CD4-positive, alpha-beta T cell (primary cell): ENCODE measurements at regions of chr1 and their contacts with region 1.

Region 1: GRCh38 chr1:244864253-244865027 is at the start of gene HNRNPU:
- DNase-seq: peak; percentile 90 to 99 (median 96)
- ATAC-seq: peak; percentile 62
- H3K4me3 ChIP-seq: peak within 1 kb of the TSS; percentile 91
- H3K4me3 Mint-ChIP-seq: peak within 1 kb of the TSS; percentile 96
- H3K27ac ChIP-seq: peak within 1 kb of the TSS; percentile 98 to 99
- H3K27ac Mint-ChIP-seq: peak within 1 kb of the TSS; percentile 98
- H3K4me1 ChIP-seq: peaks cover 24% of the 10 kb centered on the region
- H3K4me1 Mint-ChIP-seq: peaks cover 53% of the 10 kb centered on the region
- H3K27me3 ChIP-seq: no peaks in the 10 kb centered on the region
- H3K27me3 Mint-ChIP-seq: peaks cover 5% of the 10 kb centered on the region
- CTCF ChIP-seq: peak; percentile 30
- total RNA-seq, gene HNRNPU: 415 TPM

Region 2: GRCh38 chr1:244451951-244452795 is 412.3 kb before region 1 on chr1:
- CTCF ChIA-PET with region 1: no interaction called
- POLR2A ChIA-PET with region 1: interaction called, 28 read pairs
- intact Hi-C with region 1: loop called (anchors 5 to 10 kb)
- DNase-seq: peak; percentile 97 to 100 (median 99)
- ATAC-seq: peak; percentile 83
- H3K4me3 ChIP-seq: peak overlapping the region; percentile 86
- H3K4me3 Mint-ChIP-seq: peak overlapping the region; percentile 93
- H3K27ac ChIP-seq: peak overlapping the region; percentile 16 to 96
- H3K27ac Mint-ChIP-seq: peak overlapping the region; percentile 98
- H3K4me1 ChIP-seq: peaks cover 15% of the 10 kb centered on the region
- H3K4me1 Mint-ChIP-seq: peaks cover 42% of the 10 kb centered on the region
- H3K27me3 ChIP-seq: no peaks in the 10 kb centered on the region
- H3K27me3 Mint-ChIP-seq: no peaks in the 10 kb centered on the region
- CTCF ChIP-seq: peak; percentile 45

Region 3: DNA sequence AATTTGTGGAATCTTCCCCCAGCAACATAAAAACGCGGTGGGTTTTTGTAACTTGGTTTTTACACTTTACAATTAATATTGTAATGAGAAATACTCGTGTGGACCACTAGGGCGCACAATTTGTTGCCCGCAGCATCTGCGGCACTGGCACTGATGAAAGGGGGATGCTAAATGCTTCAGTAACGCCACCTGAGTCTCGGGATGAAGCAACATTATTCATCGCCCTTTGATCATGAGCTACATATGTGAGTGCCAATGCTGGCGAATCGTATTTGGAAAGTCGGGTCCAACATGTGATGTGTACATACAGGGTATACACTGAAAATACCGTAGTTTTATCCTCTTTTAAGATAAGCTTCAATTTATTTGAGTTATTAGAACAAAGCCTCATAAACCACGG is 63.2 kb before region 1 on chr1:
- CTCF ChIA-PET with region 1: interaction called, 6 read pairs
- POLR2A ChIA-PET with region 1: interaction called, 13 read pairs
- intact Hi-C with region 1: no loop called
- DNase-seq: peak; percentile 23 to 81 (median 46)
- ATAC-seq: peak; percentile 91
- H3K4me3 ChIP-seq: no peak overlapping the region
- H3K4me3 Mint-ChIP-seq: no peak overlapping the region
- H3K27ac ChIP-seq: no peak overlapping the region
- H3K27ac Mint-ChIP-seq: no peak overlapping the region
- H3K4me1 ChIP-seq: peaks cover 3% of the 10 kb centered on the region
- H3K4me1 Mint-ChIP-seq: peaks cover 4% of the 10 kb centered on the region
- H3K27me3 ChIP-seq: no peaks in the 10 kb centered on the region
- H3K27me3 Mint-ChIP-seq: peaks cover 4% of the 10 kb centered on the region
- CTCF ChIP-seq: peak; percentile 83

Region 4: GRCh38 chr1:244918421-244919319 is 54.2 kb after region 1 on chr1:
- CTCF ChIA-PET with region 1: interaction called, 5 read pairs
- POLR2A ChIA-PET with region 1: interaction called, 58 read pairs
- intact Hi-C with region 1: loop called in 1 of 2 experiments (anchors 1 kb)
- DNase-seq: peak; percentile 22 to 91 (median 66)
- ATAC-seq: peak; percentile 98
- H3K4me3 ChIP-seq: peak overlapping the region; percentile 55
- H3K4me3 Mint-ChIP-seq: peak overlapping the region; percentile 90
- H3K27ac ChIP-seq: no peak overlapping the region
- H3K27ac Mint-ChIP-seq: peak overlapping the region; percentile 56
- H3K4me1 ChIP-seq: peaks cover 7% of the 10 kb centered on the region
- H3K4me1 Mint-ChIP-seq: peaks cover 10% of the 10 kb centered on the region
- H3K27me3 ChIP-seq: no peaks in the 10 kb centered on the region
- H3K27me3 Mint-ChIP-seq: peaks cover 16% of the 10 kb centered on the region
- CTCF ChIP-seq: no peak

Region 5: DNA sequence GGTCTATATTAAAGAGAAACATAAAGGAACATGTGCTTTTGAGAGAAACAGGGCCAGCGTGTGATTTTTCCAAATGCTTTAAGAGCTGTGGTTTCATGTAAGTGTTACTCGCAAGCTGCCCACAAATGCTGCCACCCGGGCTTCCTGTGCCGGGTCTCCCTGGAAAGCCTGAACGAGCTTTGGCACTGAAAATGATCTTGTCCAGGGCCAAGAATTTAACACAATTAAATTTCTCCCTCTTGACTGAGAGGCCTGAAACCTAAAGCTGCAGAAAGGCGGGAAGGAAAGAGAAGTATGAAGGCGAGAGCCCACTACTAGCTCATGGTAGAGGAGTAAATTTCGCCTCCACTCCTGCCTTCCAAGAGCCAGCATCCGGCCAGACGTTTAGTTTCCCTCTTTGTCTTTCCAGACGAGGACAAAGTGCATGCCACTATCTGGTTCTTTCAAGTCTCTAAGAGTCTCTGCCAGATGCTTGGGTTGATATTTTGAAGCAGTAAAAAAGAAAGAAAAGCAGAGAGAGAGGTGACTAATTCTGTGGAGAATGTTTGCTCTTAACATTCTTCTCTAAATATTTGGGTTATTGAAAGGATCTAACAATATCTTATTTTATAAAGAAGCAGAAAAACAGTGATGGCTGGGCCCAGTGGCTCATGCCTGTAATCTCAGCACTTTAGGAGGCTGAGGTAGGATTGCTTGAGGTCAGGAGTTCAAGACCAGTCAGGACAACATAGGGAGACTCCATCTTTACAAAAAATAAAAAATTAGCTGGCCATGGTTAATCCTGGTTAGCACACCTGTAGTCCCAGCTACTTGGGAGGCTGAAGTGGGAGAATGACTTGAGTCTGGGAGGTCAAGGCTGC is 99.9 kb after region 1 on chr1:
- CTCF ChIA-PET with region 1: interaction called, 5 read pairs
- POLR2A ChIA-PET with region 1: interaction called, 354 read pairs
- intact Hi-C with region 1: loop called in 1 of 2 experiments (anchors 1 kb)
- DNase-seq: peak in 5 of 14 experiments; percentile 12 to 48 (median 20)
- ATAC-seq: no peak
- H3K4me3 ChIP-seq: no peak overlapping the region
- H3K4me3 Mint-ChIP-seq: no peak overlapping the region
- H3K27ac ChIP-seq: no peak overlapping the region
- H3K27ac Mint-ChIP-seq: no peak overlapping the region
- H3K4me1 ChIP-seq: peaks cover 8% of the 10 kb centered on the region
- H3K4me1 Mint-ChIP-seq: peaks cover 27% of the 10 kb centered on the region
- H3K27me3 ChIP-seq: no peaks in the 10 kb centered on the region
- H3K27me3 Mint-ChIP-seq: no peaks in the 10 kb centered on the region
- CTCF ChIP-seq: no peak